ENCODE measurements at regions of chr2 and their contacts with region 1.

Region 1: DNA sequence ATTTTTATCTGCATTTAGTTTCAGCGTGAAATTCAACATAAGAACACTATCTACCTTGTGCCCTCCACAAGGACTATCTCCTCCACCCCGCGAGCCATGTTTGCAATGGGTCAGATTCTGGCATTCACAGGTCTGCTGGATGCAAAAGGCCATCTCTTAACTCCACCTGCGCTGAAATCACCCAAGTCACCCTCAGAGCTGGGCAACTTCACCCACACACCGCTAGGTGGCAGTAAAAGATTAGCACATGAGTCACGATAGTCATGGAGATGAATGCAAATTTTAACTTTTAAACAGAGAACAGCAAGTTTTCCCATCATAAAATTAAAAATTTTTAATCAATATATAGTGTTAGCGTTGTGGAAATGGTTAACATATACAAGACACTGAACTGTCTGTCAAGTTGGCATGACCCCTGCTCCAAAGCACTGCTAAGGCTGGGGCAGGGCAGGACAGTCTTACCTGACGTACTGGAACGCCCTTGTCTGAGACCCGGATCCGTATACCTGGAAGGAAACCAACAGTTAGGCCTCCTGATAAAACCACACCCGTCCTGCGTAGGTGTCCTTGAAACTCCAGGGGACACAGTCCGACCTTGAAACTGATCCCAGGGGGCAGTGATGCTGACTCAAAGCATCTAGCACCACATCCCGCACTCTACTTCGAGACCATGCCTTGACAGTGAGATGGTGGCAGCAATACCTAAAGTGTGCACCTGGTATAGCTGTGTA is 89.6 kb downstream of the UXS1 start:
- DNase-seq: peak in 1 of 2 donors; percentile 67
- ATAC-seq: peak; percentile 67
- H3K4me3 ChIP-seq: no peak overlapping the region
- H3K27ac ChIP-seq: no peak overlapping the region
- H3K4me1 ChIP-seq: no peaks in the 10 kb centered on the region
- H3K27me3 ChIP-seq: no peaks in the 10 kb centered on the region

Region 2: GRCh38 chr2:105545730-105546627 is 558.5 kb before region 1 on chr2:
- intact Hi-C with region 1: no loop called
- DNase-seq: peak; percentile 70 to 85
- ATAC-seq: no peak
- H3K4me3 ChIP-seq: no peak overlapping the region
- H3K27ac ChIP-seq: no peak overlapping the region
- H3K4me1 ChIP-seq: no peaks in the 10 kb centered on the region
- H3K27me3 ChIP-seq: no peaks in the 10 kb centered on the region

Region 3: GRCh38 chr2:106193977-106194778 is 89.7 kb after region 1 on chr2 and contains the start of gene UXS1:
- intact Hi-C with region 1: loop called in 1 of 2 experiments (anchors 1 kb)
- DNase-seq: peak; percentile 99
- ATAC-seq: peak; percentile 94
- H3K4me3 ChIP-seq: peak within 1 kb of the TSS; percentile 77 to 100
- H3K27ac ChIP-seq: peak within 1 kb of the TSS in 1 of 2 donors; percentile 56
- H3K4me1 ChIP-seq: peaks cover 0 to 4% of the 10 kb centered on the region in 2 donors
- H3K27me3 ChIP-seq: no peaks in the 10 kb centered on the region
- total RNA-seq, gene UXS1: 20.6 to 29.3 TPM

Region 4: GRCh38 chr2:106542811-106543259 is 438.3 kb after region 1 on chr2:
- intact Hi-C with region 1: loop called (anchors 5 kb)
- DNase-seq: peak; percentile 71 to 89
- ATAC-seq: peak; percentile 88
- H3K4me3 ChIP-seq: no peak overlapping the region
- H3K27ac ChIP-seq: no peak overlapping the region
- H3K4me1 ChIP-seq: no peaks in the 10 kb centered on the region
- H3K27me3 ChIP-seq: no peaks in the 10 kb centered on the region

Region 5: DNA sequence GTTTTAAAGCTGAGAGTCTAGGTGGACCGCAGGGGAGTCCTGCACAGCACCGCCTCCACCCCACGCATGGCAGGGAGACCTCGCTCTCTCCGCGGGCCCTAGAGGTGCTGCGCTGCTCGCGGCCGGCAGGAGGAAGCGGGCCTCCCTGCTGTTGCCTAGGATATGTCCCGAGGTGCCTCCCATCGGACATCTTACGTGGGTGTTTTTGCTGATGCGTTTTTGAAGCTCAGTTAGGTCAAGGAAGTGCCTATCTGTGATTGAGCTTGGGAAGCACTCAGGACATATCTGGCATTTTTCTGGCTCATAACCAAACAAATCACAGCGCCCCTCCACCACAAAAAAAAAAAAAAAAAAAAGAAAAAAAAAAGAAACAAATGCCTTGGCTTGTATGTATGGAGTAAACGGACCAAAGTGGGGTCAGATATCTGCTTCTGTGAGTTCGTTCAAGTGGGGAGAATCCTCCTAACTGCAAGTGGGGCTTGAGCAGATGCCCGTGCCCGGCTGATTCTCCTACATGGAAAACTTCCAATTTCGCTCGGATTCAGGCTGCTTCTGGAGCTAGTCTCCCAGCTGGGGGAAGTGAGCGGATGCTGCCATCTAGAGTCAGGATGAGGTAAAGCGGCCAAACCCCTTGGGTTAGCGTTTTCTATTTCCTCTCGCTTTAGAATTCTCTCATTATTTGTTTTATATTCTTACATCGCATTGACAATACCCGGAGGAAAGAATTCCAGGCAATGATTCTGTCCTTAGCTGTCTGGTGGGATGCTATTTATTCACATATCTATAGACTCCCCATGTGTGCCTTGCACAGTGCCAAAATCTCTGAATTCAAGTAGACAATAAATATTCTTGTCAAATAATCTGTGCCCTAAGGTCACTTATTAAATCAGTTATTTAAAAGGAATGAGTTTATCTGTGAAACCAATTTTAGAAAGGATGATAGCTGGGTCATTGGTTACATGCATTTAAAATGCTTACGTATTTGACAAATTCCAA is 477.9 kb after region 1 on chr2:
- intact Hi-C with region 1: loop called (anchors 5 kb)
- DNase-seq: peak; percentile 79 to 88
- ATAC-seq: peak; percentile 88
- H3K4me3 ChIP-seq: peak overlapping the region; percentile 18 to 67
- H3K27ac ChIP-seq: no peak overlapping the region
- H3K4me1 ChIP-seq: no peaks in the 10 kb centered on the region
- H3K27me3 ChIP-seq: no peaks in the 10 kb centered on the region